ENCODE measurements at regions of chr2 and their contacts with region 1.

Region 1: DNA sequence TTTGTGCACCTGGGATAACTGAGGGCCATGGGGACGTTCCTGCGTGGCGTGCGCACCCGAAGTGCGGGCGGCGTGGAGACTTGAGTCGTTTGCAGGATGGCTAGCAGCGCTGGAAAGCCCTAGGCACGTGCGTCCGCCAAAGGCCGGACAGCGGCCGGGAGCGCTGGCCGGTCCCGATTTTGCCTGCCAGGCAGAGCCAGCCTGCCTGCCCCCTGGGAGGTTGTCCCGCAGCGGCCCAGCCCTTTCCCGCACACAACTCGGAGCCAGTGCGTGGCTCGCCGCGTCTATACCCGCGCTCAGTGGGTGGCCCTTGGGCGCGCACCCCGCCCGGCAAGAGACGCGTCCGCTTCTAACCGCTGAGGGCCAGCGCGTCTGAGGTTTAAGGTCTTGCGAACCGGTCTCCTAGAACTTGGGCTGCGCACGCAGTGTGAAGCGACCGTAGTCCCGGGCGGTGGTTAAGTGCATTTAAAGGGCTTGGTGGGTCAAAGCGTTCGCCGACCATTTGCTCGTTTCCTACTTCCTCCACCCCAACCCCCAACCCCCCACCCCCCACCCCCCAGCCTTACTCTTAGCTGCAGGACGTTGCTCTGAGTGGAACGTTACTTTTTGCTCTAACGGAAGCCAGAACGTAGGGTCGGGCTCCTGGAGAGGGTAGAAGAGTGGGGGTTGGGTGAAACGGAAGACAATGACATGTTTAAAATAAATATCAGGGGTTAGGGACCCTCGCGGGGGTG is 627 bp downstream of the CDCA7 start:
- DNase-seq: peak; percentile 61
- ATAC-seq: peak; percentile 56

Region 2: DNA sequence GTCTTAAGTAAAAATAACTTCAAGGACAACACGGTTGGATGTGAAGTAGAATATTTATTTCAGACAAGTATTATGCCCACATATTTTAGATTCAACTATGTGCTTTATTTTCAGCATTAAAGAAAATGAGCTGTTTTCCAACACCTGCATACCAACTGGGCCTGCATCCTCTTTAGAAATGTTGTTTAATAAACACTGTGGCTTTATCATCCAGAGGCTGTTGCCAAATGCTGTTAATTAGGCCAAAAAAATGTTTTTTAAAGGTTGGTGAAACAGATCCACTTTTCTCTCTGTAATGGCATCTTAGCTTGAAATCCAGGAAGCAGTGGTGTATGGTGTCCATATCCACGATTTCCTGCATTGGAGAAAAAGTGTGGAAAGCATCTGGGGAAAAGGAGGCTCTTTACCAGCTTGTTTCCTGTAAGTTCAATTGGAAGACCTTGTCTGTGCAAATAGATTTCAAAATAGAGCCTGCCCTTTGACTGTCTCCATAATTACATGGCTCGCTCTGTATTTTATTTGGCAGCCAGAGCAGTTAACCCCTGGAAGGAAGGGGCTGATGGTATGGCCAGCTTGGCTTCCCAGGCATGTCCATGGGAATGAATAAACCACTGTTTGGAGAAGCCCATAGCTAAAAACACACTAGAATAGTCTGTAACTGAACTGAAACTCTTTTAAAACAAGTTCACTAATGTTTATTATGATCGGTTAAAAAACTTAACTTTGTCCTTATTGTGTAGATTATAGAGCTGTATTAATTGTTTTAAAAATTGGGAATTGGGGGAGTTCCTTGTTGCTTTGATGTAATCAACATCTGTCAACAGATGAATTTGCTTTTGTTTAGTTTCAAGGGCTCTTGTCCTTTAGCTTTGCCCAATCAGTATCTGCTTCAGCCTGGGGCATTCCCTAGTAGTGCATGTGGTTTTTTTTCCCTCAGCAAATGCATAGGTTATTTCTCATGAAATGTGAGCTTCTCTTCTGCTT is 1303.0 kb before region 1 on chr2:
- intact Hi-C with region 1: loop called (anchors 10 kb)
- DNase-seq: no peak
- ATAC-seq: no peak